Activated T-helper 1 cell treated with anti-CD3 and anti-CD28 coated beads, Interleukin-12 subunit alpha, Interleukin-12 subunit beta, Interleukin-2, Interleukin-4 antibody, amounts not matched to agents 30 ng/mL and 10 ng/mL and 1 ng/mL, durations not matched to agents 14 hours and 24 hours and 36 hours (primary cell): ENCODE measurements at regions of chr12 and their contacts with region 1.

Region 1: GRCh38 chr12:48119078-48119833 is at the start of gene PFKM:
- DNase-seq: peak; percentile 65
- H3K4me3 Mint-ChIP-seq: peak within 1 kb of the TSS; percentile 98
- H3K27ac Mint-ChIP-seq: peak within 1 kb of the TSS; percentile 75
- H3K4me1 Mint-ChIP-seq: peaks cover 17% of the 10 kb centered on the region
- H3K27me3 Mint-ChIP-seq: peaks cover 10% of the 10 kb centered on the region
- total RNA-seq, gene PFKM: 59.7 and 68.4 TPM in 2 replicates

Region 2: DNA sequence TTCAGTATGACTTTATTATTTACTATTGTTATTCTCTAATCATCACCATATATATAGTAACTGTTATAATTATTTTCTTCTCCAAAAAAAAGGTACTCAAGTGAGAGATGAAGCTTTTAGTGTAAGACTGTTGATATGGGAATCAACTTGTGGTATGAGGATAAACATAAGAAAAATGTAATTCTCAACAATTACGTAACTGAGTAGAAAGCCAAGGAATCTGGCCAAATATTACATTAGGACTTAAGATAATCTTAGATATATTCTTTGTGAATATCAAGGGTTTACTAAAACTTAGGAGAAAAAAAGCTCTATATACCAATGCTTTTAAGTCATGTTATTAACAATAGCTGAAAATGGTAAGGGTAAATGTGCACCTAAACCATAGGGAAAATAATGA is 26.6 kb before region 1 on chr12:
- intact Hi-C with region 1: loop called (anchors 1 kb)
- DNase-seq: no peak
- H3K4me3 Mint-ChIP-seq: no peak overlapping the region
- H3K27ac Mint-ChIP-seq: no peak overlapping the region
- H3K4me1 Mint-ChIP-seq: no peaks in the 10 kb centered on the region
- H3K27me3 Mint-ChIP-seq: no peaks in the 10 kb centered on the region